Lower leg skin (tissue), 4 donors: ENCODE measurements at regions of chr11 and their contacts with region 1.

Region 1: GRCh38 chr11:91850533-91851275 is 373.9 kb upstream of the FAT3 start:
- DNase-seq: no peak
- H3K4me3 ChIP-seq: no peak overlapping the region
- CTCF ChIP-seq: no peak
- POLR2A ChIP-seq: no peak

Region 2: GRCh38 chr11:92511522-92512203 is 661.0 kb after region 1 on chr11:
- intact Hi-C with region 1: loop called (anchors 5 kb)
- DNase-seq: no peak
- H3K4me3 ChIP-seq: no peak overlapping the region
- CTCF ChIP-seq: no peak
- POLR2A ChIP-seq: no peak